ENCODE measurements at regions of chr22 and their contacts with region 1.

Region 1: DNA sequence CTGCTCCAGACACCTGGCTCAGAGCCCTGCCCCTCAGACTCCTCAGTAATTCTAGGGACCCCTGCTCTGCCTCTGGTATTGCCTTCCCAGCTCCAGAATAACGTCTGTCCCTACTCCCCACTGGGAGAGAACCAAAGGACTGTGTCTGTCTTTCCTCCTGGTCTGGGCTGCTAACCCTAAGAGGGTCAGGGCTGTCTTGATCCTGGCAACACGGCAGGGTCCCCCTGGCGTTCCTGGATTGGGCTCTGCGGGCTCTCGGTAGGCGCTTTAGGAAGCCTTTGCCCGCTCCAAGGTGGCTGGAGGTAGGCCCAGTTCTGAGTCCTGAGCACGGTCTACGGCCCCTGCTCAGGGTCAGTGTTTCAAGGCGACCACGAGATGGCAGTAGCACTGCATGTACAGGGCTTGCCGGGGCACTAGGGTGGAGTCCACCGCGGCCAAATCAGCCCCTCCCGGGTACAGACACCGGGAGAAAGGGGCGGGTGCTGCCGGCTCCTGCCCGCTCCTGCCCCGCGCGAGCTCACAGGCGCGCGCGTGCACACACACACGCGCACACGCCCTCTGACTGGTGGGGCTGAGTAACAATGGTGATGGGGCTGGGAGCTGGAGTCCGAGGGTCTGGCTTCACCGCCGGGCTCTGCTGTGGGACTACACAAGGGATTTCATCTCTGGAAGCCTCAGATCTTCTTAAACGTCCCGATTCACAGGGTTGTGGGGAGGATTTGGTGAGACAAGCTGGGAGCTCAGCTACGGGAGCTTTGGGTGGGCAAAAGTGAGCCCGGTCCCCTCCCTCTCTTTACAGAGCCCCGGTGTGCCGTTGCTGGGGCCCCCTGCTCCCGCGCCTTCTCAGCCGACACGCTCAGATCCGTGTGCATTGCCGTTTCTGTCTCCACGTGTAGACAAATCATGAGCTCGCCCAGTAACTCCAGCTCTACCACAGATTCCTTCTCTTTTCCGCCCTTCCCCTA is 30.1 kb upstream of the HMOX1 start:
- DNase-seq: peak; percentile 90
- ATAC-seq: peak; percentile 91
- H3K4me3 Mint-ChIP-seq: peak overlapping the region; percentile 78
- H3K27ac Mint-ChIP-seq: peak overlapping the region; percentile 60
- H3K4me1 Mint-ChIP-seq: peaks cover 26% of the 10 kb centered on the region
- H3K27me3 Mint-ChIP-seq: peaks cover 12% of the 10 kb centered on the region
- CTCF ChIP-seq: peak; percentile 91

Region 2: GRCh38 chr22:35124691-35125219 is 226.1 kb before region 1 on chr22:
- CTCF ChIA-PET with region 1: no interaction called
- POLR2A ChIA-PET with region 1: no interaction called
- intact Hi-C with region 1: no loop called
- DNase-seq: no peak
- ATAC-seq: no peak
- H3K4me3 Mint-ChIP-seq: no peak overlapping the region
- H3K27ac Mint-ChIP-seq: no peak overlapping the region
- H3K4me1 Mint-ChIP-seq: no peaks in the 10 kb centered on the region
- H3K27me3 Mint-ChIP-seq: peaks cover 13% of the 10 kb centered on the region
- CTCF ChIP-seq: no peak

Region 3: DNA sequence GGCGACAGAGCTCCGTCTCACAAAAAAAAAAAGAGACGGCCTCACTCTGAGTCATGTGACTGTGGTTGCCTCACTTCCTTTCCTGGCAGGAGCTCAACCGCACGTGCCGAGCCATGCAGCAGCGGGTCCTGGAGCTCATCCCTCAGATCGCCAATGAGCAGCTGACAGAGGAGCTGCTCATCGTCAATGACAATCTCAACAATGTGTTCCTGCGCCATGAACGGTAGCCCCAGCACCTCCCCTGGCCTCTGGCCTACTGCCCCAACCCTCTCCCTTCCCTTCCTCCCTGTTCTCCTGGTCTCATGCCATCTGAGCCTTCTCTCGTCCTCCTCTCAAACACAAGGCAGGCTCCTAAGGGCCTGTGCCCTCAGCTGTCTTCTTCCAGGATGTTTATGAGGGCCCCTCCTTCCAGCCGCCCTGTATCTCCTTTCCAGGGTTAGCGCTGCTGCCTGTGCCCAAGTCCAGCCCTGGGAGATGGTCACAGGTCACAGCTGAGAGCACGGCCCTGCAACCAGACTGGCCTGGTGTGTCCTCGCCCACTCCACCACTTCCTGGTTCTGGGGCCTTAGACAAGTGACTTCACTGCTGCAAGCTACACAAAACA is 20.5 kb before region 1 on chr22:
- CTCF ChIA-PET with region 1: interaction called, 13 read pairs
- POLR2A ChIA-PET with region 1: no interaction called
- intact Hi-C with region 1: no loop called
- DNase-seq: peak; percentile 72
- ATAC-seq: peak; percentile 63
- H3K4me3 Mint-ChIP-seq: peak overlapping the region; percentile 82
- H3K27ac Mint-ChIP-seq: peak overlapping the region; percentile 95
- H3K4me1 Mint-ChIP-seq: peaks cover 24% of the 10 kb centered on the region
- H3K27me3 Mint-ChIP-seq: no peaks in the 10 kb centered on the region
- CTCF ChIP-seq: no peak

Region 4: GRCh38 chr22:35582861-35583670 is 232.2 kb after region 1 on chr22:
- CTCF ChIA-PET with region 1: interaction called, 36 read pairs
- POLR2A ChIA-PET with region 1: no interaction called
- intact Hi-C with region 1: loop called (anchors 5 kb)
- DNase-seq: peak; percentile 59
- ATAC-seq: peak; percentile 78
- H3K4me3 Mint-ChIP-seq: no peak overlapping the region
- H3K27ac Mint-ChIP-seq: no peak overlapping the region
- H3K4me1 Mint-ChIP-seq: no peaks in the 10 kb centered on the region
- H3K27me3 Mint-ChIP-seq: no peaks in the 10 kb centered on the region
- CTCF ChIP-seq: peak; percentile 99

Region 5: GRCh38 chr22:35622191-35622913 is 271.5 kb after region 1 on chr22:
- CTCF ChIA-PET with region 1: interaction called, 11 read pairs
- POLR2A ChIA-PET with region 1: no interaction called
- intact Hi-C with region 1: loop called (anchors 10 kb)
- DNase-seq: no peak
- ATAC-seq: no peak
- H3K4me3 Mint-ChIP-seq: no peak overlapping the region
- H3K27ac Mint-ChIP-seq: no peak overlapping the region
- H3K4me1 Mint-ChIP-seq: peaks cover 4% of the 10 kb centered on the region
- H3K27me3 Mint-ChIP-seq: peaks cover 7% of the 10 kb centered on the region
- CTCF ChIP-seq: no peak

Region 6: DNA sequence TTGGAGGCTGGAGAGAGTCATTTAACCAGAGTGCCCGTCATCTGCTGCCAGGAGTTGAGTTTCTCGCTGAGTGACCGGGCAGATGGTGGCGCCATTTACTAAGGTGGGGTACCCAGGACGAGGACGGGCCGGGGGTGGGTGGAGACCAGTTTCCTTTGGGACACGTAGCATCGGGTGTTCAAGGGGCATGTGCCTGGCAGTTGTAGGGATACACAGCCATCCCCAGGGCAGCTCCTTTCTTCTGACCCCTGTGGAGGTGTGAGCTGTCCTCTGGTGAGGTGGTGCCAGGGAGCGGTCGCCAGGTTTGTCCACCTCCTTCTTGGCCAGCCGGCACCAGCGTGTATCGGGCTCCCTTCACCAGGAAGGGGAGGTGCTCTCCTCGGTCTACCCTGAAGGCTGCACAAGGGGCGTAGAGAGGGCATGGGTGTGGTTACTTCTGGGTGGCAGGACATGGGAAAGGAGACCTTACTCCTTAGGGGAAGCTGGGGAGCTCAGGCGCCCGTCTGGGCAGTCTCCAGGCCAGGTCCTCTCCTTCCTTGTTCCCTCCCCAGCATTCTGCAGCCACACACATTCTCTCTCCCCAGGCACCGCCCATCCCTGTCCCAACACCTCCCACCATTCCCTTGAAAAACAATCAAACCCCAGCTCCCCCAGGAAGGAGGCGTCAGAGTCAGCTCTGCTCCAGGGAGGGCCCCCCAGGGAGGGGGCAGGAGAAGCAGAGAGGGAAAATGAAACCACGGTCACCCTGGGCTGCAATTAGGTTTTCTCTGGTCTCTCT is 276.6 kb after region 1 on chr22:
- CTCF ChIA-PET with region 1: interaction called, 11 read pairs
- POLR2A ChIA-PET with region 1: no interaction called
- intact Hi-C with region 1: loop called (anchors 10 kb)
- DNase-seq: peak; percentile 87
- ATAC-seq: peak; percentile 69
- H3K4me3 Mint-ChIP-seq: peak overlapping the region; percentile 78
- H3K27ac Mint-ChIP-seq: peak overlapping the region; percentile 86
- H3K4me1 Mint-ChIP-seq: peaks cover 26% of the 10 kb centered on the region
- H3K27me3 Mint-ChIP-seq: peaks cover 7% of the 10 kb centered on the region
- CTCF ChIP-seq: peak; percentile 58